Endothelial cell of umbilical vein (primary cell): ENCODE measurements at regions of chr21 and their contacts with region 1.

Region 1: GRCh38 chr21:39004634-39005501 is 178.4 kb downstream of the PSMG1 start:
- DNase-seq: peak; percentile 84
- H3K4me3 ChIP-seq: no peak overlapping the region
- H3K27ac ChIP-seq: peak overlapping the region; percentile 60
- H3K4me1 ChIP-seq: peaks cover 56% of the 10 kb centered on the region
- H3K27me3 ChIP-seq: no peaks in the 10 kb centered on the region
- CTCF ChIP-seq: no peak
- POLR2A ChIP-seq: no peak

Region 2: GRCh38 chr21:39022863-39023693 is 18.2 kb after region 1 on chr21:
- CTCF ChIA-PET with region 1: interaction called, 3 read pairs
- POLR2A ChIA-PET with region 1: no interaction called
- dilution Hi-C with region 1: no loop called
- intact Hi-C with region 1: loop called (anchors 1 kb)
- DNase-seq: no peak
- H3K4me3 ChIP-seq: no peak overlapping the region
- H3K27ac ChIP-seq: no peak overlapping the region
- H3K4me1 ChIP-seq: peaks cover 6% of the 10 kb centered on the region
- H3K27me3 ChIP-seq: no peaks in the 10 kb centered on the region
- CTCF ChIP-seq: peak in 1 of 2 donors; percentile 8
- POLR2A ChIP-seq: no peak